Sigmoid colon (tissue), 7 donors: ENCODE measurements at regions of chr1 and their contacts with region 1.

Region 1: GRCh38 chr1:40338745-40339424 is 21.8 kb upstream of the COL9A2 start:
- DNase-seq: peak; percentile 78
- H3K4me3 ChIP-seq: no peak overlapping the region
- H3K27ac ChIP-seq: peak overlapping the region in 1 of 4 donors; percentile 26
- H3K4me1 ChIP-seq: peaks cover 0 to 5% (median 0%) of the 10 kb centered on the region in 4 donors
- H3K27me3 ChIP-seq: no peaks in the 10 kb centered on the region
- CTCF ChIP-seq: peak; percentile 85 to 99 (median 96)
- EP300 ChIP-seq: no peak
- POLR2A ChIP-seq: no peak

Region 2: DNA sequence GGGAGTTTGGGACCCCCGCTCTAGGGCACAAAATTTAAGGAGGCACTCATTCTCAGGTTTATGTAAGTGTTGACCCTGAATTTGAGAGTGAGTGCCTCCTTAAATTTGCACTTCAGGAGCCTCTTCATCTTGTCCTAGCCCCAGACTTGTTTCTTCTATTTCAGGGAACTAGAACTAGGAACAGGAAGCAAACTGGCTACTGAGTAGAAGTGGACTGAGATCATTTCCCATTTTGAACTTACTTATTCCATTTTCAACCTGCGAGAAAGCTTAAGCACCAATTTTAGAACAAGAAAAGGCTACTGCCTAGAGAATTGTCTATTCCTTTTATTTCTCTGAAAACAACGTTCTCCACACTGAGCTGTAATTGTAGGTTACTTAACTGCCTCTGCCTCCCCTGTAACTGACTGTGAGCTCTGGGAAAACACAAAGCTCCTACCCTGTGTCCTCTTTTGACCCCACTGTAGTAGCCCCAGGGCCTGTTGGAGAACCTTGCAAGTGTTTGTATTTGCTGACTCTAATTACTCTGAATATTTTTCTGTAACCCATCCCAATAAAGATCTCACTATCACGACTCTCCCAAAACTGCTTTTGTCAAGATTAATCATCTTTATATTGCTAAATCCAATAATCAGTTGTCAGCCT is 244.3 kb before region 1 on chr1:
- intact Hi-C with region 1: loop called (anchors 5 kb)
- DNase-seq: no peak
- H3K4me3 ChIP-seq: no peak overlapping the region
- H3K27ac ChIP-seq: no peak overlapping the region
- H3K4me1 ChIP-seq: peaks cover 0 to 14% (median 7%) of the 10 kb centered on the region in 4 donors
- H3K27me3 ChIP-seq: no peaks in the 10 kb centered on the region
- CTCF ChIP-seq: no peak
- EP300 ChIP-seq: no peak
- POLR2A ChIP-seq: no peak

Region 3: DNA sequence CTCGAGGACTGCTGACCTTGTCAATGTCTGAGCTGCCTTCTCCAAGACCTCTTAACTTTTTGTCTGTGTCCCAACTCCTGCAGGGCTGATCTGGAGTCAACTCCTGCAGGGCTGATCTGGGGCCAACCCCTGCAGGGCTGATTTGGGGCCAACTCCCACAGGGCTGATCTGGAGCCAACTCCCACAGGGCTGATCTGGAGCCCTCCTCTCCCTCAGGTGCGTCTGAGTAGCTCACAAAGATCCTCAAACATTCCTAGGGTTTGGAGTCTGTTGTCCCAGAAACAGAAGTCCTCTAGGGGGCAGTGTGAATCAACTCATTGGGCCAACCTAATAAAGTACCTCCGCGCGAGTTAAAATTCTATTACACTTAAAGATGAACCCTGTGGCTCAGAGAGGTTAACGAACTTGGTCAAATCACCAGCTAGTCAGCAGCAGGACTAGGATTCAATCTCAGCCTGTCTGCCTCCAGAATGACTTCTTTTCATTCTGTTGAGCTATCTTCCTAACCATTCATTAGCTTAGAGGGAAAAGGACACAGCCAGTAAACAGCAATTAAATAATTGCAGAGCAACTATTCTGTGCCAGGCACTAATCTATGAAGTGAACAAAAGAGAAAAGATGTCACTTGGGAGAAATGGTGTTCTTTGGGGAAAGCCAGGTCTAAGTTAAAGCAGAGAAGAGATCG is 194.9 kb before region 1 on chr1:
- intact Hi-C with region 1: loop called (anchors 2 kb)
- DNase-seq: peak; percentile 71
- H3K4me3 ChIP-seq: no peak overlapping the region
- H3K27ac ChIP-seq: no peak overlapping the region
- H3K4me1 ChIP-seq: no peaks in the 10 kb centered on the region
- H3K27me3 ChIP-seq: peaks cover 0 to 13% (median 0%) of the 10 kb centered on the region in 3 donors
- CTCF ChIP-seq: peak; percentile 32 to 73 (median 58)
- EP300 ChIP-seq: no peak
- POLR2A ChIP-seq: no peak

Region 4: GRCh38 chr1:40153073-40153770 is 185.7 kb before region 1 on chr1:
- intact Hi-C with region 1: loop called (anchors 1 kb)
- DNase-seq: no peak
- H3K4me3 ChIP-seq: no peak overlapping the region
- H3K27ac ChIP-seq: no peak overlapping the region
- H3K4me1 ChIP-seq: peaks cover 0 to 4% (median 2%) of the 10 kb centered on the region in 4 donors
- H3K27me3 ChIP-seq: no peaks in the 10 kb centered on the region
- CTCF ChIP-seq: peak in 3 of 4 experiments; percentile 39 to 67 (median 50)
- EP300 ChIP-seq: no peak
- POLR2A ChIP-seq: no peak

Region 5: DNA sequence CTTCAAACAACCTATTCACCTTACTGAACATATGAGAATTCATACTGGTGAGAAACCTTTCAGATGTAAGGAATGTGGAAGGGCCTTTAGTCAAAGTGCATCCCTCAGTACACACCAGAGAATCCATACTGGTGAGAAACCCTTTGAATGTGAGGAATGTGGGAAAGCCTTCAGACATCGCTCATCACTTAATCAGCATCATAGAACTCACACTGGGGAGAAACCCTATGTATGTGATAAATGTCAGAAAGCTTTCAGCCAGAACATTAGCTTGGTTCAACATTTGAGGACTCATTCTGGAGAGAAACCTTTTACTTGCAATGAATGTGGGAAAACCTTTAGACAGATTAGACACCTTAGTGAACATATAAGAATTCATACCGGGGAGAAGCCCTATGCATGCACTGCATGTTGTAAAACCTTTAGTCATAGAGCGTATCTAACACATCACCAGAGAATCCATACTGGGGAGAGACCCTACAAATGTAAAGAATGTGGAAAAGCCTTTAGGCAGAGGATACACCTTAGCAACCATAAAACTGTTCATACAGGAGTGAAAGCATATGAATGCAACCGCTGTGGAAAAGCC is 156.5 kb after region 1 on chr1:
- intact Hi-C with region 1: no loop called
- DNase-seq: no peak
- H3K4me3 ChIP-seq: no peak overlapping the region
- H3K27ac ChIP-seq: no peak overlapping the region
- H3K4me1 ChIP-seq: no peaks in the 10 kb centered on the region
- H3K27me3 ChIP-seq: no peaks in the 10 kb centered on the region
- CTCF ChIP-seq: no peak
- EP300 ChIP-seq: no peak
- POLR2A ChIP-seq: no peak